ENCODE measurements at regions of chr7 and their contacts with region 1.

Region 1: GRCh38 chr7:73522105-73522872 is at the start of gene BAZ1B:
- DNase-seq: peak; percentile 95
- ATAC-seq: peak; percentile 92
- H3K4me3 ChIP-seq: peak within 1 kb of the TSS; percentile 77
- H3K27ac ChIP-seq: peak within 1 kb of the TSS; percentile 91
- H3K4me1 ChIP-seq: peaks cover 21% of the 10 kb centered on the region
- H3K27me3 ChIP-seq: no peaks in the 10 kb centered on the region
- CTCF ChIP-seq: no peak
- EP300 ChIP-seq: no peak
- POLR2A ChIP-seq: peak; percentile 86
- RAD21 ChIP-seq: no peak
- polyA plus RNA-seq, gene BAZ1B: 14.0 to 20.3 TPM

Region 2: DNA sequence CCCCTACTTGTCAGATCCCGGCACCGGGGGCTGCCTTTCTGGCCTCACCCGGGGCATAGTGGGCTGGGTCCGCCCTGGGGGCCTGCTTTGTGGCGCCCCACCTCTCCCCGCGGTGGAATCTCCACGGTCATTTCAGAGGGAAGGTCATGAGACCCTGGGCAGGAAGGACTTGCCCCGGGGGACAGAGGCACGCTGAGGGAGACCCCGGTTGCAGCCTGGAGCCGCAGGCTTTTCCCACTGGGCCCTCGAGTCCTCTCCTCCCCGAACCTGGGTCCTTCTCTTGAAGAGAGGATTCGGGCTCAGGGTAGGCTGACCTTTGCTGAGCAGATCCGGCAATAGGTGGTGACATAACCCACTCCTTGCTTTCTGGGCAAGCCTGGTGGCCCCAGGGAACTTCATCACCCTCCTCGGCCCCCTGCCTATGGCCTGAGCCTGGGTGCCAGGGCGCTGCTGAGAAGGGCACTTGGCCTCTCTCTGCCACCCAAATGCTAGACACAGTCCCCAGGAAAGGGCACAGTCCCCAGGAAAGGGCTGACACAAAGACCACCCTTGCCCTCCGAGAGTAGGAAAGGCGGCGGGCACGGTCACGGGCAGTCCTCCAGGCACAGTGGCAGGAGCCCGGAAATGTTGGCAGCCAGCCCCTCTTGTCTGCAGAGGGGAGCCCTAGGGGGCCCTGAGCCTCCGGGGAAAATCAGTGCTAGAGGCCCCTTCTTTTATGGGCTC is 158.1 kb before region 1 on chr7:
- CTCF ChIA-PET with region 1: no interaction called
- POLR2A ChIA-PET with region 1: no interaction called
- RAD21 ChIA-PET with region 1: no interaction called
- SMC1A ChIA-PET with region 1: no interaction called
- in situ Hi-C with region 1: no loop called
- intact Hi-C with region 1: no loop called
- DNase-seq: no peak
- ATAC-seq: no peak
- H3K4me3 ChIP-seq: no peak overlapping the region
- H3K27ac ChIP-seq: no peak overlapping the region
- H3K4me1 ChIP-seq: no peaks in the 10 kb centered on the region
- H3K27me3 ChIP-seq: peaks cover 0 to 2% of the 10 kb centered on the region in 2 experiments; a peak in 1 of 4 replicates
- CTCF ChIP-seq: no peak
- EP300 ChIP-seq: no peak
- POLR2A ChIP-seq: no peak
- RAD21 ChIP-seq: no peak

Region 3: GRCh38 chr7:73557108-73557396 is 34.8 kb after region 1 on chr7:
- CTCF ChIA-PET with region 1: interaction called, 9 read pairs
- POLR2A ChIA-PET with region 1: interaction called, 41 read pairs
- RAD21 ChIA-PET with region 1: interaction called, 21 read pairs
- SMC1A ChIA-PET with region 1: interaction called, 10 read pairs
- in situ Hi-C with region 1: no loop called
- intact Hi-C with region 1: loop called (anchors 1 kb)
- DNase-seq: peak; percentile 47
- ATAC-seq: peak; percentile 98
- H3K4me3 ChIP-seq: peak overlapping the region; percentile 98
- H3K27ac ChIP-seq: peak overlapping the region; percentile 97
- H3K4me1 ChIP-seq: peaks cover 18% of the 10 kb centered on the region
- H3K27me3 ChIP-seq: no peaks in the 10 kb centered on the region
- CTCF ChIP-seq: no peak
- EP300 ChIP-seq: no peak
- POLR2A ChIP-seq: no peak
- RAD21 ChIP-seq: no peak

Region 4: GRCh38 chr7:73578342-73579127 is 56.2 kb after region 1 on chr7 and contains the start of gene TBL2:
- CTCF ChIA-PET with region 1: interaction called, 3 read pairs
- POLR2A ChIA-PET with region 1: interaction called, 25 read pairs
- RAD21 ChIA-PET with region 1: interaction called, 9 read pairs
- SMC1A ChIA-PET with region 1: interaction called, 4 read pairs
- in situ Hi-C with region 1: no loop called
- intact Hi-C with region 1: loop called (anchors 1 kb)
- DNase-seq: peak; percentile 87
- ATAC-seq: peak; percentile 93
- H3K4me3 ChIP-seq: peak within 1 kb of the TSS; percentile 88
- H3K27ac ChIP-seq: peak within 1 kb of the TSS; percentile 73
- H3K4me1 ChIP-seq: peaks cover 15% of the 10 kb centered on the region
- H3K27me3 ChIP-seq: no peaks in the 10 kb centered on the region
- CTCF ChIP-seq: peak; percentile 24 to 38 (median 36); a peak in 3 of 6 replicates
- EP300 ChIP-seq: no peak
- POLR2A ChIP-seq: peak; percentile 98
- RAD21 ChIP-seq: peak; percentile 23; the same call in 1 of the 2 replicates
- polyA plus RNA-seq, gene TBL2: 1.1 to 2.8 TPM

Region 5: DNA sequence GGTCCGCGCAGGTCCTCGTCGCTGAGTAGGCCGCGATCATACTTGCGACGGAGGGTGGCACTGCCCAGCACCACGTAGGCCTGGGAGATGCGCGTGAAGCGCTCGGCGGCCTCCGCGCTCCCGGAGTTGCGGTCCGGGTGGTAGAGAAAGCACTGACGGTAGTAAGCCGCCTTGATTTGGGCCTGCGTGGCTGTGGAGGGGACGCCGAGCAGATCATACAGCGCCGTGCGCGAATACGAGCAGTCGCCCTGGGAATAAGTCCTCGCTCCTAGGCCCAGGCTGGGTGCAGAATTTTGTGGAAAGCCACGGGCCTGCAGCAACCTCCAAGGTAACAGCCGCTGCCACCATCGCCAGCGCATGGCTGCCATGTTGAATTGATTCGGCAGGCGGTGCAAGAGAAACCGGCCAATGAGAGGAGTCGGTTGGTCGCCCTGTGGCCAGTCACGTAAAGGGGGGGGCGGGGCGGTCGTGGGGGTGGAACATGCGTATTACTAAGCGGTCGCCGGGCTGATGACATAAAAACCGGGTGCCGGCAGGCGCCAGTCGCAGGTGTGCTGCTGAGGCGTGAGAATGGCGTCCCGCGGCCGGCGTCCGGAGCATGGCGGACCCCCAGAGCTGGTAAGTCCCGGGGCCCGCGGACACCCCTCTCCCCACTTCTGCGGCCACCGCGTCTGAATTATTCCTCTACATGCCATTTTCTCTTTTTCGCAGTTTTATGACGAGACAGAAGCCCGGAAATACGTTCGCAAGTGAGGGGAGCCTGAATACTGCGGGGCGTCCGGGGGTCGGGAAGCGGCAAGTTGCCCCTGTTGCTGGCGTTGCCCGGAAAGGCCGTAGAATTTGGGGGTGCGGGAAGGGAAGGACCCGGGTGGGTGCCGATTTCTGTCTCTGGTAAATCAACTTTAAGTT is 161.0 kb after region 1 on chr7 and contains the starts of genes BUD23 and DNAJC30:
- CTCF ChIA-PET with region 1: no interaction called
- POLR2A ChIA-PET with region 1: no interaction called
- RAD21 ChIA-PET with region 1: no interaction called
- SMC1A ChIA-PET with region 1: no interaction called
- in situ Hi-C with region 1: no loop called
- intact Hi-C with region 1: loop called (anchors 10 kb)
- DNase-seq: peak; percentile 71
- ATAC-seq: peak; percentile 98
- H3K4me3 ChIP-seq: peak within 1 kb of the TSS; percentile 91
- H3K27ac ChIP-seq: peak within 1 kb of the TSS; percentile 81
- H3K4me1 ChIP-seq: peaks cover 15% of the 10 kb centered on the region
- H3K27me3 ChIP-seq: no peaks in the 10 kb centered on the region
- CTCF ChIP-seq: no peak
- EP300 ChIP-seq: no peak
- POLR2A ChIP-seq: peak; percentile 97
- RAD21 ChIP-seq: no peak
- polyA plus RNA-seq, gene BUD23: 36.4 to 89.9 TPM
- polyA plus RNA-seq, gene DNAJC30: 2.1 to 3.5 TPM

Region 6: GRCh38 chr7:73738612-73739374 is 216.5 kb after region 1 on chr7 and contains the start of gene ABHD11:
- CTCF ChIA-PET with region 1: no interaction called
- POLR2A ChIA-PET with region 1: interaction called, 4 read pairs
- RAD21 ChIA-PET with region 1: interaction called, 4 read pairs
- SMC1A ChIA-PET with region 1: interaction called, 3 read pairs
- in situ Hi-C with region 1: no loop called
- intact Hi-C with region 1: loop called (anchors 10 kb)
- DNase-seq: peak; percentile 90
- ATAC-seq: peak; percentile 89
- H3K4me3 ChIP-seq: peak within 1 kb of the TSS; percentile 92
- H3K27ac ChIP-seq: peak within 1 kb of the TSS; percentile 79
- H3K4me1 ChIP-seq: no peaks in the 10 kb centered on the region; the same call in 1 of the 2 replicates
- H3K27me3 ChIP-seq: no peaks in the 10 kb centered on the region
- CTCF ChIP-seq: no peak
- EP300 ChIP-seq: no peak
- POLR2A ChIP-seq: peak; percentile 92
- RAD21 ChIP-seq: no peak
- polyA plus RNA-seq, gene ABHD11: 2.8 to 5.6 TPM

Region 7: DNA sequence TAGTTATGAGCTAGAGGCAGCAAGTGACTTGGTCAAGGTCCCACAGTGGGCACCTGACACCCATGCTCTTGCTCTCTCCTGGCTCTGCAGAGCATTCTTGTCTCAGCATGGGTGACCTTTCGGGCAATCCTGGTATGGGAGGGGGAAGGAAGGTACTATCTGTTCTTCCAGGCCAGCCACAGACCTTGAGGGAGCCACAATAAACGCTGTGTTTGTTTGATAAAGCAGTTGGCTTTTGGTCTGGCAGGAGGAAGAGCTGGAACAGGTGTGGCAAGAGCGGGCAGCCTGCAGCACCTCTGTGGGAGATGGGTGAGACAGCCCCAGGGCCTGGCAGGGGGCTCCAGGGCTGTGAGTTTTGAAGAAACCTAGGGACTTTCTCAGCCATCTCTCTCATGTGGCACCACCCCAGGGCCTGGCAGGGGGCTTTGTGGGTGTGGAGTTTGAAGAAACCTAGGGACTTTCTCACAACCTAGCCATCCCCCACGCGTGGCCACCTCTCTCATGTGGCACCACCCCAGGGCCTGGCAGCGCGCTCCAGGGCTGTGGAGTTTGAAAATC is 236.4 kb after region 1 on chr7:
- CTCF ChIA-PET with region 1: no interaction called
- POLR2A ChIA-PET with region 1: no interaction called
- RAD21 ChIA-PET with region 1: no interaction called
- SMC1A ChIA-PET with region 1: no interaction called
- in situ Hi-C with region 1: no loop called
- intact Hi-C with region 1: no loop called
- DNase-seq: no peak
- ATAC-seq: no peak
- H3K4me3 ChIP-seq: no peak overlapping the region
- H3K27ac ChIP-seq: no peak overlapping the region
- H3K4me1 ChIP-seq: no peaks in the 10 kb centered on the region
- H3K27me3 ChIP-seq: no peaks in the 10 kb centered on the region
- CTCF ChIP-seq: no peak
- EP300 ChIP-seq: no peak
- POLR2A ChIP-seq: no peak
- RAD21 ChIP-seq: no peak

Region 8: GRCh38 chr7:73885975-73886798 is 363.9 kb after region 1 on chr7:
- CTCF ChIA-PET with region 1: no interaction called
- POLR2A ChIA-PET with region 1: no interaction called
- RAD21 ChIA-PET with region 1: no interaction called
- SMC1A ChIA-PET with region 1: no interaction called
- in situ Hi-C with region 1: no loop called
- intact Hi-C with region 1: no loop called
- DNase-seq: no peak
- ATAC-seq: no peak
- H3K4me3 ChIP-seq: no peak overlapping the region
- H3K27ac ChIP-seq: no peak overlapping the region
- H3K4me1 ChIP-seq: no peaks in the 10 kb centered on the region
- H3K27me3 ChIP-seq: no peaks in the 10 kb centered on the region; a peak in 1 of 4 replicates
- CTCF ChIP-seq: no peak
- EP300 ChIP-seq: no peak
- POLR2A ChIP-seq: no peak
- RAD21 ChIP-seq: no peak

Region 9: DNA sequence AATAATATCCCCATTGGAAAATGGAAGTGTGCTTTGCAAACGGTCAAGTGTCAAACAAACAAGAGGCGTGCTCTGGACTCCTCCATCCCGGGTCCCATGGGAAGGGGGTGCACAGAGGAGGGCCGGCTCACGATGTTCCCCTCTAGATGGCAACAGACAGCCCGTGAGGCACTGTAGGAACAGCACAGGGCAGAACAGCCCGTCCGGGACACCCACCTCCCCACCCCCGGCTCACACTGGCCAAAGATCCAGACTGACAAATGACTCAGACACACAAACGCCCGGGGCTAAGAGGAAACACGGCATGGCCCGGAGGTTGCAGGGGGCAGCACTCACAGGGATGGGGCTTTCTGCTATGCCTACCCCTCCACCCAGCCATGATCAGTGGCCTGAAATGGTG is 500.7 kb after region 1 on chr7:
- CTCF ChIA-PET with region 1: no interaction called
- POLR2A ChIA-PET with region 1: no interaction called
- RAD21 ChIA-PET with region 1: no interaction called
- SMC1A ChIA-PET with region 1: no interaction called
- in situ Hi-C with region 1: no loop called
- intact Hi-C with region 1: no loop called
- DNase-seq: no peak
- ATAC-seq: no peak
- H3K4me3 ChIP-seq: no peak overlapping the region
- H3K27ac ChIP-seq: no peak overlapping the region
- H3K4me1 ChIP-seq: no peaks in the 10 kb centered on the region
- H3K27me3 ChIP-seq: peaks cover 2% of the 10 kb centered on the region in 2 experiments; a peak in 3 of 4 replicates
- CTCF ChIP-seq: no peak
- EP300 ChIP-seq: no peak
- POLR2A ChIP-seq: no peak
- RAD21 ChIP-seq: no peak

Measured in GM12878 (cell line).